ENCODE measurements at regions of chr2 and their contacts with region 1.

Region 1: GRCh38 chr2:236871500-236872001 is 214.1 kb upstream of the COPS8 start:
- DNase-seq: peak; percentile 41 to 68
- ATAC-seq: peak; percentile 79 to 83
- H3K4me3 ChIP-seq: no peak overlapping the region
- H3K27ac ChIP-seq: peak overlapping the region; percentile 42 to 67 (median 54)
- H3K4me1 ChIP-seq: peaks cover 0 to 15% of the 10 kb centered on the region in 2 donors
- H3K27me3 ChIP-seq: no peaks in the 10 kb centered on the region
- CTCF ChIP-seq: no peak
- POLR2A ChIP-seq: no peak

Region 2: DNA sequence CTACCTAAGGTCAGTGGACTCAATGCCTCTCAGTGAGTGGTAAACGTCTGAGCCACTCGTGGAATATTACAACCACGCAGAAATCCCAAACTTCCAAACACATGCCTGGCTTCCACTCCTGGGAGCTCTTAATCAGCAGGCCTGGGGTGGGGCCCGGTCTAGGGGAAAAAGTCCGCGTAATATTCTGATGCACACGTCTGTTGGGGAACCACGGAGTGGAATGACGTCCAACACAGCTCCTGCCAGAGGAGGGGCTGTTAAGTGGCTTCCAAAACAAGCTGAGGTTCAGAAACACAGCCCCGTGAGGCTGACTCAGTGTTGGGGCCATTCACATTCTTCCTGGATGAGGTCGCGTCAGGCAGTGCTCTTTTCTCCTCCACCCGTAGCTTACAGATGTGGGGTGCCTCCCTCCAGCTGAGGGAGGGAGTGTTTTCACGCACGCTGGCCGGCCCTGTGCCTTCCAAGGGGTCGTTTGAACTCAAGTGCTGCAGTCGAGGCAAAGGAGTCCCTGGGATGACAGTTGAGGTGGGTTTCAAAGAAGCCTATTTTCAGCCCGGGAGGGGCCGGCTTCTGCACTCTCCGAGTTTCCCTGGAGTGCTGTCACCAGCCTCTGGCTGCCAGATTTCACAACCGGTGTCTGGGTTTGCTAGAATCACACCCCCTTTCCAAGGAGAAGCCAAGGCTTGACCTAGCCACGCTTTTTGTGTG is 228.8 kb before region 1 on chr2:
- in situ Hi-C with region 1: no loop called
- intact Hi-C with region 1: loop called (anchors 2 kb)
- DNase-seq: peak; percentile 78 to 91
- ATAC-seq: peak; percentile 85
- H3K4me3 ChIP-seq: no peak overlapping the region
- H3K27ac ChIP-seq: peak overlapping the region; percentile 58 to 71 (median 66)
- H3K4me1 ChIP-seq: no peaks in the 10 kb centered on the region
- H3K27me3 ChIP-seq: peaks cover 0 to 3% (median 0%) of the 10 kb centered on the region in 3 donors
- CTCF ChIP-seq: no peak
- POLR2A ChIP-seq: peak in 1 of 2 donors; percentile 2

Region 3: DNA sequence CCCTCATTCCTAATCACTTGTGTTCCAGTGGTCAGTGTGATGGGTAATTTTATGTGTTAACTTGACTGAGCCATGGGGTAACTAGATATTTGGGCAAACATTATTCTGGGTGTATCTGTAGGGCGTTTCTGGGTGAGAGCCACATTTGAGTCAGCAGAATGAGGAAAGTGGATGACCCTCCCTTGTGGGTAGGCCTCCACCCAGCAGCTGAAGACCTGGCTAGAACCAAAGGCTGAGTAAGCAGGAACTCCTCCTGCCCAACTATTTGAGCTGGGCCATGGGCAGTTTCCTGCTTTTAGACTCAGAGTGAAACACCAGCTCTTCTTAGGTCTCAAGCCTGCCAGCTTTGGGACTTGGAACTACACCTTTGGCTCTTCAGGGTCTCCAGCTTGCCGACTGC is 160.1 kb before region 1 on chr2:
- in situ Hi-C with region 1: no loop called
- intact Hi-C with region 1: loop called (anchors 5 kb)
- DNase-seq: peak in 1 of 2 donors; percentile 58
- ATAC-seq: peak; percentile 34 to 49
- H3K4me3 ChIP-seq: no peak overlapping the region
- H3K27ac ChIP-seq: peak overlapping the region in 1 of 4 donors; percentile 8
- H3K4me1 ChIP-seq: peaks cover 7 to 8% of the 10 kb centered on the region in 2 donors
- H3K27me3 ChIP-seq: no peaks in the 10 kb centered on the region
- CTCF ChIP-seq: no peak
- POLR2A ChIP-seq: no peak

Region 4: DNA sequence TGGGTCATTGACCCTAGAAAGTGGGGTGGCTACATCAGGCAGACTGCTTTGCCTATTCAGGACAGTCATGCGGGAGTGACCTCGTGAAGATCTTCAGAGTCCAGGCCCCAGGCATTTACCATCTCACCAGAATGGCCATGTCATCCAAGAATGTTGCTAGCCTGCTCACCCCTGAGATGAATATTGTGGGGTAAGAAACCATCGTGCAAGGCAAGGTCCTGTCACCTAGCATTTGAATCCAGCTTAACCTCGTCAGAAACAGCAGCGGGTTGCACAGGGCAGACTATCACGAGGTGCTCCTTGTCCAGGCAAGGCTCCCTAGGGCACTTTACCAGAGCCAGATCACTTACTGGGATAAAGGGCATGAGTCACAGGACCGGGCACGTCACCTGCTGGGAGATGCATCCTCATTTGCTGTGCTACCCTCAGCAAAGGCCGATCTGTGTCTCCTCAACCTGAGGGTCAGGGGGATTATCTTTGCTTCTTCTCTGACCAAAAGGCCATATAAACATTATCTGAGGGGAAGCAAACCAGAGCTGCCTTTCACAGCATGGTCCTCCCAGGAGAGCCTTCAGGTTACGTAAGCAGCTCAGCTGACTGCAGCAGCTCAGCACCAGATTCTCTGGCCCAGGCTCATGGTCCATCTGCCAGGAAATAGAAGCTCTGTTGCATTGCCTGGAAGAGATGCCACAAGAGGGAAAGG is 139.5 kb before region 1 on chr2:
- in situ Hi-C with region 1: no loop called
- intact Hi-C with region 1: loop called (anchors 2 kb)
- DNase-seq: peak; percentile 85 to 96
- ATAC-seq: peak; percentile 93 to 95
- H3K4me3 ChIP-seq: peak overlapping the region in 1 of 4 donors; percentile 16
- H3K27ac ChIP-seq: peak overlapping the region; percentile 89 to 92 (median 90)
- H3K4me1 ChIP-seq: peaks cover 29 to 31% of the 10 kb centered on the region in 2 donors
- H3K27me3 ChIP-seq: no peaks in the 10 kb centered on the region
- CTCF ChIP-seq: peak in 1 of 5 experiments; percentile 15
- POLR2A ChIP-seq: no peak

Region 5: DNA sequence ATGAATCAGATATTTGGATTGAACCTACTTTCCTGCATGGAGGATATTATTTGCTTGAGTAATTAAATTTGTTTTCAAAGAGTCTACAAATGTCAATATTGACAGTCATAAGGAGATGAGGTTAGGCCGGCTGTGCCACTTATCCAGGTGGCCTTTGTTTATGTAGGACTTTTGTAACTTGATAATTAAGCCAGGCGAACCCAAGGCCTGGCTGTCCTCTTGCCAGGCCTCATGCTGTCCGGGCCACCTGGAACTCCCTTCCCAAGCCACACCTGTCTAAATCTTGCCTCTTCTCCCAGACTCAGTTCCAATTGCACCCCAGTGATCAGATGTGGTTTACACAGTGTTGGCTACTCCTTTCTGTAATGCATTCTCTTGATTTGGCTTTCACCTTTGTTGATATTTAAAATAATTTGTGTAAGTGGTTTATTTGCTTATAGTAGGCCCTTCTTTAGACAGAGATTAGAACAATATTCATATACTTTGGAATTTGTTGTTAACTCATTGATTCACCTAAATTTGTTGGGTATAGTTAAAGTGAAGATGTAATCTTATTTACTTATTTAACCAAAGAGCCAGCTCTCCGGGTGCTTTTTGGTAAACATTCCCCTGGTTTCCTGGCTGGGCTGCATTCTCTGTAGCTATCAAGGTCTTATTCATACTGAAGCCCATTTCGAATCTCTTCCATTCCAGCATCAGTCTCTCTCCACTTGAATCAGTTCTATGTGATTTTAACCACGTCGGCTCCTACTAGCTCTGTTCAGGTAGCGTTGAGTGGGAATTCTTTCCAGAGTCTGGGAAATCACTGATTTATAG is 46.5 kb before region 1 on chr2:
- in situ Hi-C with region 1: no loop called
- intact Hi-C with region 1: loop called (anchors 1 kb)
- DNase-seq: peak; percentile 20 to 51
- ATAC-seq: peak in 1 of 2 donors; percentile 70
- H3K4me3 ChIP-seq: no peak overlapping the region
- H3K27ac ChIP-seq: peak overlapping the region in 3 of 4 donors; percentile 23 to 49 (median 39)
- H3K4me1 ChIP-seq: peaks cover 11 to 20% of the 10 kb centered on the region in 2 donors
- H3K27me3 ChIP-seq: no peaks in the 10 kb centered on the region
- CTCF ChIP-seq: no peak
- POLR2A ChIP-seq: no peak

Region 6: DNA sequence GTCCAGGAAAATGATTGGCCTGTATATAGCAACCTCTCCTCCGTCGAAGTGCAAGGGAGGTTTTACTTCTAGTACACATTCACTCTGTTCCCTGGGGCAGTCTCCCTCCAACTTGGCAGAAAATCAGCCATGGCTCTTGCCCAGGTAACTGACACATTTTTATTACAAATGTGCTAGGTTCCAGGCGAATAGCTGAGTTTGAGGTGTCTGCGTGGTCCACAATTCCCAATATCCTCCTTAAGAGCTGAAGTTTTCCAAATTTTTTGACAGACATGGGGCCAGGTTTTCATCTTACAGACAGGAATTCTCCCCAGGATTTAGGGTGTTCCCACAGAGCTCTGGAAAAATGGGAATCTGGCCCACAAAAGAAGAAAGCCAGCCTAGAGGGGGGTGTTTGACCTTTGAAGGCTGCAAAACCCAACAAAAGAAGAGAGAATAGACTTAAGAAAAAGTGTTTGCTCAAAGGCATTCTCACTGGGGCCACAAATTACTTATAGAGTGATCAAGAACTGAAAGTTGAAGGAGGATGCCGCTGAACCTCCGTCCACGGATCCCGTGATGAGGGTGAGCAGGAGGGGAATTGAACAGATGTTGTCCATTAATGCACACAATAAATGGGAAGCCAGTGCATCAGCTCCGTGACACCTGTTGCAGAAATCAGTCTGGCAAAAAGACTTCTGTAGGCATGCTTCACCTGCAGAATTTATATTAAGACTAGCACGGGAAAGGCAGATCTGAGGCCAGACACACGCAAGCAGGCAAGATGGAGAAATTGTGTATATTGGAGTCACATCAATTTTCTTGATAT is 28.2 kb before region 1 on chr2:
- in situ Hi-C with region 1: no loop called
- intact Hi-C with region 1: no loop called
- DNase-seq: no peak
- ATAC-seq: no peak
- H3K4me3 ChIP-seq: no peak overlapping the region
- H3K27ac ChIP-seq: no peak overlapping the region
- H3K4me1 ChIP-seq: no peaks in the 10 kb centered on the region
- H3K27me3 ChIP-seq: no peaks in the 10 kb centered on the region
- CTCF ChIP-seq: no peak
- POLR2A ChIP-seq: no peak

Region 7: DNA sequence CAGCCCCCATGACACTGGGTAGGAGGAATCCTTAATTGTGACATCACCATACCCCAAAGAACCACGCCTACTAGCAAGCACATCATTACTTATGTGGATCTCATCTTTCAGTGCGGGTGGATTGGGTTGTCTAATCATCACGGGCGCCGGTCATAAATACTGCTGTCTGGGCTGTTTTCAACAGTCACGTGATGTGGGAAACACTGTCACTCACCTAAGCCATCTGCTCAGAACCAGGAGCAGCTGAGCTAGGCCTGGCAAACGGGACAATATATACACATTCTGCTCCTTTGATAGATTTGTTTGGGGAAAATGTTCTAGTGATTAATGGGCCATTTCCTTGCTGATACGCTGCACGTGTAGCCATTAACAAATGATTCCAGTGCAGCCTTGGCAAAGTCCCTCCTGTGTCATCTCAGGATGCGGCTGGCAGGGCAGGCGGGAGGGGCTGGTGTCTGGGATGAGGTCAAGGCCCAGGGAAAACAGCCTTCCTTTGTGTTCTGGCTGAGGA is 68.2 kb after region 1 on chr2:
- in situ Hi-C with region 1: no loop called
- intact Hi-C with region 1: no loop called
- DNase-seq: no peak
- ATAC-seq: no peak
- H3K4me3 ChIP-seq: no peak overlapping the region
- H3K27ac ChIP-seq: no peak overlapping the region
- H3K4me1 ChIP-seq: no peaks in the 10 kb centered on the region
- H3K27me3 ChIP-seq: no peaks in the 10 kb centered on the region
- CTCF ChIP-seq: no peak
- POLR2A ChIP-seq: no peak

Region 8: GRCh38 chr2:237322564-237322963 is 451.0 kb after region 1 on chr2:
- in situ Hi-C with region 1: no loop called
- intact Hi-C with region 1: no loop called
- DNase-seq: no peak
- ATAC-seq: peak in 1 of 2 donors; percentile 42
- H3K4me3 ChIP-seq: no peak overlapping the region
- H3K27ac ChIP-seq: peak overlapping the region; percentile 48 to 72 (median 60)
- H3K4me1 ChIP-seq: peaks cover 12 to 31% of the 10 kb centered on the region in 2 donors
- H3K27me3 ChIP-seq: no peaks in the 10 kb centered on the region
- CTCF ChIP-seq: peak; percentile 12 to 57 (median 45)
- POLR2A ChIP-seq: no peak

Measured in gastrocnemius medialis (tissue), 4 donors.